ENCODE measurements at regions of chr1 and their contacts with region 1.

Region 1: GRCh38 chr1:201447911-201448871 is 20.8 kb downstream of the PHLDA3 start:
- DNase-seq: peak; percentile 83
- ATAC-seq: peak; percentile 89
- H3K4me3 Mint-ChIP-seq: no peak overlapping the region
- H3K27ac Mint-ChIP-seq: no peak overlapping the region
- H3K4me1 Mint-ChIP-seq: peaks cover 35% of the 10 kb centered on the region
- H3K27me3 Mint-ChIP-seq: peaks cover 3% of the 10 kb centered on the region; the same call in 1 of the 2 replicates
- CTCF ChIP-seq: peak; percentile 80

Region 2: GRCh38 chr1:201348211-201348566 is 100.0 kb before region 1 on chr1:
- CTCF ChIA-PET with region 1: interaction called, 18 read pairs
- POLR2A ChIA-PET with region 1: no interaction called
- DNase-seq: peak; percentile 81
- ATAC-seq: peak; percentile 87
- H3K4me3 Mint-ChIP-seq: no peak overlapping the region; the same call in 1 of the 2 replicates
- H3K27ac Mint-ChIP-seq: 0 out of 2 replicates have a peak overlapping the region, but pooled peaks have one; percentile 10
- H3K4me1 Mint-ChIP-seq: peaks cover 40% of the 10 kb centered on the region
- H3K27me3 Mint-ChIP-seq: no peaks in the 10 kb centered on the region; the same call in 1 of the 2 replicates
- CTCF ChIP-seq: peak; percentile 74

Region 3: GRCh38 chr1:201399352-201400126 is 48.7 kb before region 1 on chr1:
- CTCF ChIA-PET with region 1: interaction called, 11 read pairs
- POLR2A ChIA-PET with region 1: no interaction called
- DNase-seq: peak; percentile 76
- ATAC-seq: peak; percentile 68
- H3K4me3 Mint-ChIP-seq: peak overlapping the region; percentile 62
- H3K27ac Mint-ChIP-seq: no peak overlapping the region
- H3K4me1 Mint-ChIP-seq: peaks cover 26% of the 10 kb centered on the region
- H3K27me3 Mint-ChIP-seq: peaks cover 8% of the 10 kb centered on the region; the same call in 1 of the 2 replicates
- CTCF ChIP-seq: no peak

Region 4: GRCh38 chr1:201468844-201469511 is 20.8 kb after region 1 on chr1 and contains the start of gene PHLDA3:
- CTCF ChIA-PET with region 1: interaction called, 69 read pairs
- POLR2A ChIA-PET with region 1: interaction called, 17 read pairs
- DNase-seq: peak; percentile 85
- ATAC-seq: peak; percentile 68
- H3K4me3 Mint-ChIP-seq: peak within 1 kb of the TSS; percentile 90
- H3K27ac Mint-ChIP-seq: no peak within 1 kb of the TSS; the same call in 1 of the 2 replicates
- H3K4me1 Mint-ChIP-seq: peaks cover 30% of the 10 kb centered on the region
- H3K27me3 Mint-ChIP-seq: peaks cover 40% of the 10 kb centered on the region
- CTCF ChIP-seq: no peak
- total RNA-seq, gene PHLDA3: 53.9 to 95.1 TPM (median 59.7 TPM) in 3 replicates

Region 5: GRCh38 chr1:201500670-201501120 is 52.5 kb after region 1 on chr1:
- CTCF ChIA-PET with region 1: interaction called, 13 read pairs
- POLR2A ChIA-PET with region 1: no interaction called
- DNase-seq: no peak
- ATAC-seq: peak; percentile 16
- H3K4me3 Mint-ChIP-seq: no peak overlapping the region
- H3K27ac Mint-ChIP-seq: peak overlapping the region; percentile 77
- H3K4me1 Mint-ChIP-seq: peaks cover 49% of the 10 kb centered on the region
- H3K27me3 Mint-ChIP-seq: peaks cover 2% of the 10 kb centered on the region
- CTCF ChIP-seq: no peak

Region 6: DNA sequence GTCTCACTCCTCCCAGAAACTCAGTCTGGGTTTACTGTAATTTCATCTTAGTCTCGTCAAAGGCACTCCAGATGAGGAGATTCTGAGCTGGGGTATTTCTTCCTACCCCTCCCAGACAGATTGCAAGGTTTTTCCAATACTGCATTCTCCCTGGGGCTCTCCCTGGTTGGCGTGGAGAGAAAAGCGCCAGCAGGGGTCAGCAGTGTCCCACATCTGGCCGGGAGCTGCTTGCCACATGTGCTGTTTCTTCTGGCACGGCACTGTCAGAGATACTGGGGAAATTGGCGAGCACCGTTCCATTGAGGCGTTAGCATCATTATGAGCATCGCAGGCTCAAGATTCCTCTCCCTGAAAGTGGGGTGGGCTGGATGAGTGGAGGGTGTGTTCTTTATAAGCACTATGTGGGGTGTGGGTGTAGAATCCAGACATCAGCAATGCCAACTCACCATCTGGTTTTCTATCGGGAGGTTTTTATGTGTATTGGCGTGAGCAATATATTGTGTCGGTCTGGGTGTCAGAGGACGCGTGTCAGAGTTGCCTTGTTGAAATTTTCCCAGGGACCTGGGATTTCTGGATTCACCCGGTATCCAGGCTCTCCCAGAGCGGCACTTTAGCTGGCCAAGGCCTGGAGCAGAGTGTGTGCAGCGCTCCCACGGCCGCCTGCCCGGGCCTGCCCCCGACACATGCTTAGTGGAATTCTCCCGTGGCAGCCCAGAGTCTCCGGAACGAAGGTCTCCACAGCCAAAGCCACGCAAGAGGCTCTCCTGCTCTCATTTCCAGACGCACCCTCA is 82.7 kb after region 1 on chr1:
- CTCF ChIA-PET with region 1: interaction called, 16 read pairs
- POLR2A ChIA-PET with region 1: no interaction called
- DNase-seq: peak; percentile 90
- ATAC-seq: peak; percentile 96
- H3K4me3 Mint-ChIP-seq: no peak overlapping the region
- H3K27ac Mint-ChIP-seq: 0 out of 2 replicates have a peak overlapping the region, but pooled peaks have one; percentile 50
- H3K4me1 Mint-ChIP-seq: peaks cover 23% of the 10 kb centered on the region
- H3K27me3 Mint-ChIP-seq: 0 out of 2 replicates have a peak, but pooled peaks cover under 1% of the 10 kb centered on the region
- CTCF ChIP-seq: peak; percentile 62

Measured in WTC11 (cell line).